ENCODE measurements at regions of chr16 and their contacts with region 1.

Region 1: GRCh38 chr16:31440516-31441184 is 1.9 kb downstream of the ZNF843 start:
- DNase-seq: peak; percentile 30
- H3K4me3 ChIP-seq: no peak overlapping the region
- H3K27ac ChIP-seq: no peak overlapping the region
- H3K4me1 ChIP-seq: peaks cover 0 to 12% (median 7%) of the 10 kb centered on the region in 4 donors
- H3K27me3 ChIP-seq: no peaks in the 10 kb centered on the region
- CTCF ChIP-seq: no peak
- EP300 ChIP-seq: no peak
- POLR2A ChIP-seq: no peak

Region 2: GRCh38 chr16:31179747-31180459 is 260.7 kb before region 1 on chr16 and contains the start of gene FUS:
- intact Hi-C with region 1: loop called (anchors 5 kb)
- DNase-seq: peak; percentile 96
- H3K4me3 ChIP-seq: peak within 1 kb of the TSS; percentile 77 to 94 (median 92)
- H3K27ac ChIP-seq: peak within 1 kb of the TSS; percentile 93 to 99 (median 98)
- H3K4me1 ChIP-seq: peaks cover 0 to 42% (median 40%) of the 10 kb centered on the region in 4 donors
- H3K27me3 ChIP-seq: no peaks in the 10 kb centered on the region
- CTCF ChIP-seq: no peak
- EP300 ChIP-seq: no peak
- POLR2A ChIP-seq: peak; percentile 97
- total RNA-seq, gene FUS: 44.1 to 63.9 (median 60.4) TPM

Region 3: DNA sequence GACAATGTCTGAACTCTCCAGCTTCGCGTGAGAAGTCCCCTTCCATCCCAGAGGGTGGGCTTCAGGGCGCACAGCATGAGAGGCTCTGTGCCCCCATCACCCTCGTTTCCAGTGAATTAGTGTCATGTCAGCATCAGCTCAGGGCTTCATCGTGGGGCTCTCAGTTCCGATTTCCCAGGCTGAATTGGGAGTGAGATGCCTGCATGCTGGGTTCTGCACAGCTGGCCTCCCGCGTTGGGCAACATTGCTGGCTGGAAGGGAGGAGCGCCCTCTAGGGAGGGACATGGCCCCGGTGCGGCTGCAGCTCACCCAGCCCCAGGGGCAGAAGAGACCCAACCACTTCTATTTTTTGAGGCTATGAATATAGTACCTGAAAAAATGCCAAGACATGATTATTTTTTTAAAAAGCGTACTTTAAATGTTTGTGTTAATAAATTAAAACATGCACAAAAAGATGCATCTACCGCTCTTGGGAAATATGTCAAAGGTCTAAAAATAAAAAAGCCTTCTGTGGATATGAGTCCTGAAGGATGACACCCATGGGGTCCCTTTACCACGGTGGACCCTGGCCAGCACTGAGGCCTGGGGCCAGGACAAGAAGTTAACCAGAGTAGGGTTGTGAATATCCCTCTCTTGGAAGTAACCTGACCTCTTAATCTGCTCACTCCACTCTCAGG is 58.0 kb before region 1 on chr16:
- intact Hi-C with region 1: no loop called
- DNase-seq: no peak
- H3K4me3 ChIP-seq: no peak overlapping the region
- H3K27ac ChIP-seq: no peak overlapping the region
- H3K4me1 ChIP-seq: no peaks in the 10 kb centered on the region
- H3K27me3 ChIP-seq: peaks cover 0 to 21% (median 0%) of the 10 kb centered on the region in 3 donors
- CTCF ChIP-seq: peak in 1 of 4 experiments; percentile 11
- EP300 ChIP-seq: no peak
- POLR2A ChIP-seq: no peak

Region 4: GRCh38 chr16:31636433-31636832 is 195.8 kb after region 1 on chr16:
- intact Hi-C with region 1: no loop called
- DNase-seq: no peak
- H3K4me3 ChIP-seq: no peak overlapping the region
- H3K27ac ChIP-seq: no peak overlapping the region
- H3K4me1 ChIP-seq: no peaks in the 10 kb centered on the region
- H3K27me3 ChIP-seq: no peaks in the 10 kb centered on the region
- CTCF ChIP-seq: no peak
- EP300 ChIP-seq: no peak
- POLR2A ChIP-seq: no peak

Region 5: GRCh38 chr16:31853300-31853699 is 412.6 kb after region 1 on chr16:
- intact Hi-C with region 1: no loop called
- DNase-seq: no peak
- H3K4me3 ChIP-seq: no peak overlapping the region
- H3K27ac ChIP-seq: no peak overlapping the region
- H3K4me1 ChIP-seq: no peaks in the 10 kb centered on the region
- H3K27me3 ChIP-seq: no peaks in the 10 kb centered on the region
- CTCF ChIP-seq: no peak
- EP300 ChIP-seq: no peak
- POLR2A ChIP-seq: no peak

Measured in sigmoid colon (tissue), 7 donors.